Activated naive CD8-positive, alpha-beta T cell treated with anti-CD3 and anti-CD28 coated beads, Interleukin-2, amount 10 ng/mL, durations not matched to agents 7 days and 5 days (primary cell): ENCODE measurements at regions of chr15 and their contacts with region 1.

Region 1: GRCh38 chr15:44663409-44664308 is at the start of gene SPG11:
- DNase-seq: peak; percentile 94
- ATAC-seq: peak; percentile 83
- H3K4me3 Mint-ChIP-seq: peak within 1 kb of the TSS; percentile 94
- H3K27ac Mint-ChIP-seq: peak within 1 kb of the TSS; percentile 98
- H3K4me1 Mint-ChIP-seq: peaks cover 50% of the 10 kb centered on the region
- H3K27me3 Mint-ChIP-seq: no peaks in the 10 kb centered on the region
- total RNA-seq, gene SPG11: 110 TPM

Region 2: GRCh38 chr15:44584162-44584749 is 79.4 kb before region 1 on chr15:
- POLR2A ChIA-PET with region 1: interaction called, 15 read pairs
- DNase-seq: peak; percentile 57
- ATAC-seq: peak; percentile 80
- H3K4me3 Mint-ChIP-seq: no peak overlapping the region
- H3K27ac Mint-ChIP-seq: no peak overlapping the region
- H3K4me1 Mint-ChIP-seq: peaks cover 3% of the 10 kb centered on the region
- H3K27me3 Mint-ChIP-seq: no peaks in the 10 kb centered on the region

Region 3: GRCh38 chr15:44682211-44682610 is 18.6 kb after region 1 on chr15:
- POLR2A ChIA-PET with region 1: interaction called, 150 read pairs
- DNase-seq: no peak
- ATAC-seq: no peak
- H3K4me3 Mint-ChIP-seq: peak overlapping the region; percentile 72
- H3K27ac Mint-ChIP-seq: peak overlapping the region; percentile 88
- H3K4me1 Mint-ChIP-seq: peaks cover 69% of the 10 kb centered on the region
- H3K27me3 Mint-ChIP-seq: no peaks in the 10 kb centered on the region

Region 4: GRCh38 chr15:44698641-44699040 is 35.0 kb after region 1 on chr15:
- POLR2A ChIA-PET with region 1: interaction called, 10 read pairs
- DNase-seq: no peak
- ATAC-seq: no peak
- H3K4me3 Mint-ChIP-seq: no peak overlapping the region
- H3K27ac Mint-ChIP-seq: no peak overlapping the region
- H3K4me1 Mint-ChIP-seq: peaks cover 20% of the 10 kb centered on the region
- H3K27me3 Mint-ChIP-seq: no peaks in the 10 kb centered on the region

Region 5: GRCh38 chr15:44728576-44729407 is 65.1 kb after region 1 on chr15:
- POLR2A ChIA-PET with region 1: interaction called, 622 read pairs
- DNase-seq: peak; percentile 91
- ATAC-seq: peak; percentile 79
- H3K4me3 Mint-ChIP-seq: peak overlapping the region; percentile 98
- H3K27ac Mint-ChIP-seq: peak overlapping the region; percentile 100
- H3K4me1 Mint-ChIP-seq: peaks cover 62% of the 10 kb centered on the region
- H3K27me3 Mint-ChIP-seq: no peaks in the 10 kb centered on the region